CD4-positive, alpha-beta memory T cell (primary cell): ENCODE measurements at regions of chr2 and their contacts with region 1.

Region 1: GRCh38 chr2:74482801-74483674 is at the starts of genes CCDC142 and TTC31:
- DNase-seq: peak; percentile 94 to 98 (median 96)
- H3K4me3 ChIP-seq: peak within 1 kb of the TSS; percentile 57 to 100
- H3K4me3 Mint-ChIP-seq: peak within 1 kb of the TSS; percentile 99 to 100 (median 100)
- H3K27ac ChIP-seq: peak within 1 kb of the TSS; percentile 91
- H3K27ac Mint-ChIP-seq: peak within 1 kb of the TSS; percentile 91 to 100 (median 100)
- H3K4me1 ChIP-seq: peaks cover 28% of the 10 kb centered on the region
- H3K4me1 Mint-ChIP-seq: peaks cover 17 to 43% (median 25%) of the 10 kb centered on the region in 4 donors
- H3K27me3 ChIP-seq: no peaks in the 10 kb centered on the region
- H3K27me3 Mint-ChIP-seq: no peaks in the 10 kb centered on the region
- total RNA-seq, gene CCDC142: 63.9 to 67.6 TPM
- total RNA-seq, gene TTC31: 43.7 to 46.9 TPM

Region 2: DNA sequence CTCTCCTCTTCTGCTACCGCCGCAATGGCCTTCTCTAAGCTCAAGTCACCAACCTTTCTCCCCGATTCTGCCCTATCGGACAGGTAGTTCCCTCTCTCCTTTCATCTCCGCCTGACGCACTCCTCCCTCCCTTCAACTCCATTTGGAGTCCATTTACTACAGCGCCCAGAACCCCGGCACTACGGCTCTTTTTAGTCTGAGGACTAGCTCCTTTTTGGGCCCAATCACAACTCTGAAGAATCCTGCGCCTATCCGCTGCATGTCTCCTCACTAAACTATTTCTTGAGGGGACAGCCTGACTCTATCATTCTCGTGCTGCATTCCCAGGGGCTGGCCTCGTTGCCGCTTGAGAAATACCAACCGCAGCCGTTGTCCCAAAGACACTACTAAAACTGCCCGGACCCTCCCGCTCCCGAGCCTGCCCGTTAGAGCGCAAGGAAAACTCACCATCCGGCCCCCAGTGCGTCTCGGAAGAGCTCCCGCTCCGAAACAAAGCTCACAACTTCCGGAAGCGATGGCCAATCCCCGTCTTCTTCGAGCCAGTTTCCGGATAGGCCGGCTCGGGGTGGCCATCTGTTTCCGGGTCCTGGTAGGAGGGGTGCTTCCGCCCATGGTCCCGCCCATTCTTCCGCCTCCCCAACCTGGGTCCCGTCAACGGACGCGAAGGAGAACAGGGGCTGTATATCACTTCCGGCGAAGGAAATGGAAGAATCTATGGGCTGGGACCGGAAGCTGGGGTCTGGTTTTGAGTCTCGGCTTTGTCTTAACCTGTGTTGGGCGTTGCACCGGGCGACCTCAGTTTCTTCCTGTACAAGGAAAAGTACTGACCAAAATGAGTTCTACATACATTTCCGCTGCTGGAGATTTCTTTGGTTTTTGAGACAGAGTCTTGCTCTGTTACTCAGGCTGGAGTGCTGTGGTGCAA is 745.9 kb before region 1 on chr2 and contains the start of gene TPRKB:
- CTCF ChIA-PET with region 1: interaction called, 4 read pairs
- POLR2A ChIA-PET with region 1: interaction called, 10 read pairs
- intact Hi-C with region 1: no loop called
- DNase-seq: peak; percentile 93 to 95 (median 94)
- H3K4me3 ChIP-seq: peak within 1 kb of the TSS; percentile 43 to 74
- H3K4me3 Mint-ChIP-seq: peak within 1 kb of the TSS; percentile 90 to 98 (median 95)
- H3K27ac ChIP-seq: peak within 1 kb of the TSS; percentile 68
- H3K27ac Mint-ChIP-seq: peak within 1 kb of the TSS; percentile 85 to 96 (median 93)
- H3K4me1 ChIP-seq: peaks cover 24% of the 10 kb centered on the region
- H3K4me1 Mint-ChIP-seq: peaks cover 15 to 25% (median 19%) of the 10 kb centered on the region in 4 donors
- H3K27me3 ChIP-seq: no peaks in the 10 kb centered on the region
- H3K27me3 Mint-ChIP-seq: no peaks in the 10 kb centered on the region
- total RNA-seq, gene TPRKB: 31.7 to 33.0 TPM

Region 3: DNA sequence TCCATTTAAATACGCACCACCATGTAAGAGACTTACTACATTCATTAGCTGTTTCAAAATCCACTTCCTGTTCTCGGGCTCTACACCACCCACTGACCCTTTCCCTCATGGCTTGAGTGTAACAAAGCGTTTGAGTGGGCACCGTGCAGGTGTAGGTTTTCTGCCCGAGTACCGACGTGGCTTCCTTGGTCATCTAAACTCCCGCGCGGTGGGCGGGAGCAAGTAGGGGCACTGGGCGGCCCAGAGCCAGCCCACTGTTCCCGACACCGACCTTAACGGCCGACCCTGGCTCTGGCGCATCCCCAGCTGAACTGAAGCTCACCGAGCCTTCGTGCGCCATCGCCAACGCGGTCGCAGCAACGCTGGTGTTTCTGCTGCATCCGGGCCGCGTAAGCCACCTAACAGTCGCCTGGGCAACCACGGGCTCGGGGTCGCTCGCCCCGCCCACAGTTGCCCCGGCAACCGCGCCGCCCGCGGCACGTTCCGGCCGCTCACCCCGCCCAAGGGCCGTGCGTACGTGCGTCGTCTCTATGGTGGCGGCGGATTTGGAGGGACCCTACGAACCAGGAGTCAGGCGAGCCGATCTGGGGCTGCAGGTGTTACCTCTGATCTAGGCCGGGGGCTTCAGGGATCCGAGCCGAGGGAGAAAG is 61.7 kb before region 1 on chr2 and contains the starts of genes C2orf81 and WDR54:
- CTCF ChIA-PET with region 1: interaction called, 6 read pairs
- POLR2A ChIA-PET with region 1: interaction called, 19 read pairs
- intact Hi-C with region 1: loop called (anchors 1 kb)
- DNase-seq: peak; percentile 91 to 96 (median 95)
- H3K4me3 ChIP-seq: peak within 1 kb of the TSS; percentile 76 to 88
- H3K4me3 Mint-ChIP-seq: peak within 1 kb of the TSS; percentile 96 to 100 (median 98)
- H3K27ac ChIP-seq: peak within 1 kb of the TSS; percentile 93
- H3K27ac Mint-ChIP-seq: peak within 1 kb of the TSS; percentile 88 to 100 (median 99)
- H3K4me1 ChIP-seq: peaks cover 11% of the 10 kb centered on the region
- H3K4me1 Mint-ChIP-seq: peaks cover 12 to 30% (median 21%) of the 10 kb centered on the region in 4 donors
- H3K27me3 ChIP-seq: no peaks in the 10 kb centered on the region
- H3K27me3 Mint-ChIP-seq: no peaks in the 10 kb centered on the region
- total RNA-seq, gene C2orf81: 5.3 to 7.5 TPM
- total RNA-seq, gene WDR54: 36.3 to 41.0 TPM

Region 4: DNA sequence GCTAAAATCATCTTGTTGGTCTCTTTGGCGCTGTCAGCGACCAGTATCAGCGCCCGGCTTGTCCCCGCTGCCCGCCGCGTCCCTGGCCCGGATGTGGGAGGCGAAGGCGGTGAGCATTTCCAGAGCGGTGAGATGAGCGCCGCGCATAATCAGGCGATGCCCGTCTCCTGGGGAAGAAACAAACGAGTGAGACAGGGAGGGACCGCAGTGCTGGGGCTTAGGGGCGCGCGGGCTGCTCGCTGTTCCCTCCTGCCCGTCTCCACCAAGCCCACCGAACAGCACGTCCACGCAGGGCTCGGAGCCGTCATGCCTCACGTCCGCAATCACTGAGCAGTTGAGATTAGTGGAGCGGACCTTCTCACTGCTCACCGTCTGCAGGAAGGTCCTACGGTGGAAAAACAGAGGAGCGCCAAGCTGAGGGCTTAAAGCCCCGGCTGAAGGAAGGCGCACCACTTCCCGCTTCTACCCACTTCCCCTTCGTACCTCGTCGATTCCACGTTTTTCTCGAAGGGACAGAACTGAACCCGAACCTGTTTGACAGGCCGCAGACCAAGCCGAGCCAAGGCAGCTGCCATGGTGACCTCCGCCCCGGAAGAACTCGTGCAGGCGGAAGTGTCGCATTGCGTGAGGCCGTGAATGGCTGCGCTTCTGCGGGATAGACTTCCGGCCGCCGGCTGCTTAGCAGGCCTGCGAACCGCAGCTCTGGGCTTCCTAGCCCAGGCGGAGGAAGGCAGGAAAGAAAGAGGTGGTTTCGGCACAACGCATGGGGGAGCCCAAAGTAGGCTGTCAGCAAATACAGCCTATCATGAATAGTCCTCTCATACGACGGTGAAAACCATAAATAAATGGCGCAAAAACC is 10.7 kb before region 1 on chr2 and contains the start of gene MRPL53:
- CTCF ChIA-PET with region 1: interaction called, 32 read pairs
- POLR2A ChIA-PET with region 1: interaction called, 119 read pairs
- intact Hi-C with region 1: loop called (anchors 1 kb)
- DNase-seq: peak; percentile 95 to 96 (median 95)
- H3K4me3 ChIP-seq: peak within 1 kb of the TSS; percentile 67 to 84
- H3K4me3 Mint-ChIP-seq: peak within 1 kb of the TSS; percentile 96 to 99 (median 98)
- H3K27ac ChIP-seq: peak within 1 kb of the TSS; percentile 88
- H3K27ac Mint-ChIP-seq: peak within 1 kb of the TSS; percentile 97 to 100 (median 99)
- H3K4me1 ChIP-seq: peaks cover 20% of the 10 kb centered on the region
- H3K4me1 Mint-ChIP-seq: peaks cover 9 to 40% (median 21%) of the 10 kb centered on the region in 4 donors
- H3K27me3 ChIP-seq: no peaks in the 10 kb centered on the region
- H3K27me3 Mint-ChIP-seq: no peaks in the 10 kb centered on the region
- total RNA-seq, gene MRPL53: 72.8 to 82.3 TPM

Region 5: DNA sequence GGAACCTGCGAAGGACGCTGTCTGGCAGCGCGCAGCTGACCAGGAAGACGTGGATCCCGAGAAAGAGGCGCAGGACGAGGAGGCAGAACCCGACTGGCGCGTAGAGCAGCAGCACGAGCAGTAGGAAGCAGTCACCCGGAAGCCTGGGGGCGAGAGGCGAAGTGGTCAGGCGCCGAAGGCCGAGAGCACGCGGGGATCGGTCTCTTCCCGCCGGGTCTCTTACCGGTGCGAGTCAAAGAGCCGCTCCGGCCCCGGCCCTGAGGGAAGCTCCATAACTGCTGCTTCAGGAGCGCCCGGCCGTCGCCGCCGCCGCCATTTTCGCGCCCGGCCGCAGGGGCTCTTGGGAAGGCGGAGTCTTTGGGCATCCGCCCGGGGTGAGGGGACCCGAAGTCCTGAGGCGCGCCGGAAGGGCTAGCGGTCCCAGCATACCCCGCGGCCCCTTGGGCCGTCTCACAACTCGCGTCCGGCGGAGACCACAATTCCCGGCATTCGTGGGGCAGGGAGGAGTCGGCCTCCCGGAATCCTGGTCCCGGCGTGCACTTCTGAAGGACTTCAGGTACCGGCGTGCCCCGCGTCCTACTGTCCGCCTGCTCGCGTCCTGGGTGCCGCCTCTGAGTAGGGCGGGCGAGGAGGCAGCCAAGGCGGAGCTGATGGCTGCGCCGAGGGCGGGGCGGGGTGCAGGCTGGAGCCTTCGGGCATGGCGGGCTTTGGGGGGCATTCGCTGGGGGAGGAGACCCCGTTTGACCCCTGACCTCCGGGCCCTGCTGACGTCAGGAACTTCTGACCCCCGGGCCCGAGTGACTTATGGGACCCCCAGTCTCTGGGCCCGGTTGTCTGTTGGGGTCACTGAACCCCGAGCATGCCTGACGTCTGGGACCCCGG is 46.6 kb after region 1 on chr2 and contains the starts of genes AUP1 and HTRA2:
- CTCF ChIA-PET with region 1: interaction called, 63 read pairs
- POLR2A ChIA-PET with region 1: interaction called, 87 read pairs
- intact Hi-C with region 1: loop called (anchors 1 kb)
- DNase-seq: peak; percentile 83 to 88 (median 86)
- H3K4me3 ChIP-seq: peak within 1 kb of the TSS; percentile 89 to 100
- H3K4me3 Mint-ChIP-seq: peak within 1 kb of the TSS; percentile 92 to 96 (median 94)
- H3K27ac ChIP-seq: peak within 1 kb of the TSS; percentile 84
- H3K27ac Mint-ChIP-seq: peak within 1 kb of the TSS; percentile 87 to 97 (median 94)
- H3K4me1 ChIP-seq: peaks cover 31% of the 10 kb centered on the region
- H3K4me1 Mint-ChIP-seq: peaks cover 19 to 50% (median 40%) of the 10 kb centered on the region in 4 donors
- H3K27me3 ChIP-seq: no peaks in the 10 kb centered on the region
- H3K27me3 Mint-ChIP-seq: no peaks in the 10 kb centered on the region
- total RNA-seq, gene AUP1: 153 to 158 TPM
- total RNA-seq, gene HTRA2: 39.8 to 41.1 TPM

Region 6: GRCh38 chr2:74587664-74588277 is 104.7 kb after region 1 on chr2:
- CTCF ChIA-PET with region 1: interaction called, 141 read pairs
- POLR2A ChIA-PET with region 1: interaction called, 39 read pairs
- intact Hi-C with region 1: loop called (anchors 1 kb)
- DNase-seq: peak; percentile 58 to 68 (median 67)
- H3K4me3 ChIP-seq: no peak overlapping the region
- H3K4me3 Mint-ChIP-seq: no peak overlapping the region
- H3K27ac ChIP-seq: no peak overlapping the region
- H3K27ac Mint-ChIP-seq: no peak overlapping the region
- H3K4me1 ChIP-seq: peaks cover 8% of the 10 kb centered on the region
- H3K4me1 Mint-ChIP-seq: peaks cover 7 to 10% (median 9%) of the 10 kb centered on the region in 4 donors
- H3K27me3 ChIP-seq: peaks cover 13% of the 10 kb centered on the region
- H3K27me3 Mint-ChIP-seq: peaks cover 1 to 8% of the 10 kb centered on the region in 2 donors